ENCODE measurements at regions of chr4 and their contacts with region 1.

Region 1: GRCh38 chr4:139907001-139907809 is 241.6 kb downstream of the MGST2 start:
- DNase-seq: no peak
- ATAC-seq: no peak
- H3K4me3 ChIP-seq: no peak overlapping the region
- H3K27ac ChIP-seq: no peak overlapping the region
- H3K4me1 ChIP-seq: no peaks in the 10 kb centered on the region
- H3K27me3 ChIP-seq: no peaks in the 10 kb centered on the region

Region 2: GRCh38 chr4:139522457-139522856 is 384.7 kb before region 1 on chr4:
- intact Hi-C with region 1: loop called in 1 of 2 experiments (anchors 5 kb)
- DNase-seq: no peak
- ATAC-seq: no peak
- H3K4me3 ChIP-seq: no peak overlapping the region
- H3K27ac ChIP-seq: no peak overlapping the region
- H3K4me1 ChIP-seq: no peaks in the 10 kb centered on the region
- H3K27me3 ChIP-seq: no peaks in the 10 kb centered on the region

Region 3: DNA sequence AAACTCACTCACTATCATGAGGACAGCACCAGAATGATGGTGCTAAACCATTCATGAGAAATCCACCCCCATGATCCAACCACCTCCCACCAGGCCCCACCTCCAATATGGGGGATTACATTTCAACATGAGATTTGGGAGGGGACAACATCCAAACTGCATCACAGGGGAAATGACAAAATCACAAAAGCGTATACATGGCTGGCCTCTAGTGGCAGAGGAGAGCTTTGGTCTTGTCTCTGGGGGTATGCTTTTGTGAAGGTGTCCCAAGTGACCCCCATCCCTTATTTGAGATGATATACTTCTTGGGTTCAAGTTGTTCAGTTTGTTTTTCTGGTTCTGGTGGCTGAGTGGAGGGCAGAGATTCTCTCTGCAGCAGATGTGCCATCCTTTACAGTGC is 342.7 kb before region 1 on chr4:
- intact Hi-C with region 1: no loop called
- DNase-seq: no peak
- ATAC-seq: no peak
- H3K4me3 ChIP-seq: no peak overlapping the region
- H3K27ac ChIP-seq: no peak overlapping the region
- H3K4me1 ChIP-seq: no peaks in the 10 kb centered on the region
- H3K27me3 ChIP-seq: no peaks in the 10 kb centered on the region

Region 4: DNA sequence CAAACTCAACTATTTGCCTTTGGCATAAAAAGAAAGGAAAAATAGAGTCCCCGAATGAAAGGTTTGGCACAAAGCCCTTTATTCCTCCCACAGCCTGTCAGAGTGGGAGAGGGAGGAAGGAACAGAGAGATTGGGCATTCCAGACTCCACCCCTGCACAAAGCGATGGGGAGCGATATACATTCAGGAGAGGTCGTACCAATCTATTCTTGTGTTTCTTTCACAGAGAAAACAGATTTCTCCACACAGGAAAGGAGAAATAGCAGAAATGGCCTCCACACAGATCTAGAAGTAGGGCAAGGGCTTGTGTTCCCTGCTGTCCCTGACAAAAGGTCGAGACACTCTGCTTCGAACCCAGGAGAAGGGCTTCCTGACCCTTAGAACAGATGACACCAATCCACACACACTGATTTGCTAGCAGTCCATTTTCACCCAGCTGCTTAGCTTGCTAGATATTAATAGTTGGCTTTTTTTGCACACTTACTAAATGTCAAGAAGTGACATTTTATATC is 49.4 kb after region 1 on chr4:
- intact Hi-C with region 1: loop called in 1 of 2 experiments (anchors 5 kb)
- DNase-seq: no peak
- ATAC-seq: no peak
- H3K4me3 ChIP-seq: peak overlapping the region; percentile 20 to 34
- H3K27ac ChIP-seq: peak overlapping the region in 1 of 2 donors; percentile 63
- H3K4me1 ChIP-seq: peaks cover 2 to 4% of the 10 kb centered on the region in 2 donors
- H3K27me3 ChIP-seq: no peaks in the 10 kb centered on the region